ENCODE measurements at regions of chr17 and their contacts with region 1.

Region 1: GRCh38 chr17:50200457-50201275 is 765 bp downstream of the COL1A1 start:
- DNase-seq: peak; percentile 90
- ATAC-seq: peak; percentile 79 to 82

Region 2: GRCh38 chr17:50269477-50270434 is 69.1 kb after region 1 on chr17:
- intact Hi-C with region 1: loop called (anchors 2 to 5 kb)
- DNase-seq: peak; percentile 68
- ATAC-seq: peak; percentile 55 to 59

Region 3: DNA sequence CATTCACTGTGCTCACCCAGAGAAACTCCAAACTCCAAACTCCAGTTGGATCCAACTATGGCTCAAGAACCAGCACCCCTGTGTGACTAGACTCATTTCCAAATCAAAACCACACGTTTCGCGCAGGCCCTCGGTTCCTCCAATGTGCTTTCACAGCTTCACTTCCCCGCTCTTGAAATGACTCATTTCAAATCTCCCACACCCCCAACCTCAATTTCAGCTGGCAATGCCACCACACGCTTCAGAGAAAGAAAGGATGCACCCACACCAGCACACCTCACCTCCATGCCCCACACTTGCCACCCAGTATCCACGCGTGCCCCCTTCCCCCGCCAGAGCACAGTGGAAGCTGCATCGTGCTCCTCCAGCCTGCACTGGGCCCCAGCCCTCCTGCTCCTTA is 82.6 kb after region 1 on chr17:
- intact Hi-C with region 1: no loop called
- DNase-seq: no peak
- ATAC-seq: no peak

Region 4: DNA sequence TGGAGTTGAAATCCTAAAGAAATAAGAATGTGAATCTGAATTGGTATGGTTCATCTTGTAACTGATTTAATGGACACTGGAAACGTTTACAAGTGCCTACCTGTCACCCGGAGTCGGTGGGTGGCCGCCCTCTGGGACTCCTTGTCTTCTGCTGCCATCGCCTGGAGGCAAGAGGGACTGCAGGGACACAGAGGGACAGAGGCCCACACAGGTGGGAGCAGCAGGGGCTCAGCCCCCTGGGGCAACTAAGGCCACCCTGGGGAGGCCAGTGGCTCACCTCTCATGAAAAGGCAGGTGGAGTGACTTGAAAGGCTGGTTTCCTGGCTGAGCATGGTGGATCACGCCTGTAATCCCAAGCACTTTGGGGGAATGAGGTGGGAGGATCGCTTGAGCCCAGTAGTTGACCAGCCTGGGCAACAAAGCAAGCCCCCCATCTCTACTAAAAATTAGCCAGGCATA is 96.8 kb after region 1 on chr17:
- intact Hi-C with region 1: loop called (anchors 1 to 5 kb)
- DNase-seq: peak; percentile 81
- ATAC-seq: peak; percentile 93 to 95

Measured in left cardiac atrium (tissue), 4 donors.